GM23248 (cell line): ENCODE measurements at regions of chr13 and their contacts with region 1.

Region 1: DNA sequence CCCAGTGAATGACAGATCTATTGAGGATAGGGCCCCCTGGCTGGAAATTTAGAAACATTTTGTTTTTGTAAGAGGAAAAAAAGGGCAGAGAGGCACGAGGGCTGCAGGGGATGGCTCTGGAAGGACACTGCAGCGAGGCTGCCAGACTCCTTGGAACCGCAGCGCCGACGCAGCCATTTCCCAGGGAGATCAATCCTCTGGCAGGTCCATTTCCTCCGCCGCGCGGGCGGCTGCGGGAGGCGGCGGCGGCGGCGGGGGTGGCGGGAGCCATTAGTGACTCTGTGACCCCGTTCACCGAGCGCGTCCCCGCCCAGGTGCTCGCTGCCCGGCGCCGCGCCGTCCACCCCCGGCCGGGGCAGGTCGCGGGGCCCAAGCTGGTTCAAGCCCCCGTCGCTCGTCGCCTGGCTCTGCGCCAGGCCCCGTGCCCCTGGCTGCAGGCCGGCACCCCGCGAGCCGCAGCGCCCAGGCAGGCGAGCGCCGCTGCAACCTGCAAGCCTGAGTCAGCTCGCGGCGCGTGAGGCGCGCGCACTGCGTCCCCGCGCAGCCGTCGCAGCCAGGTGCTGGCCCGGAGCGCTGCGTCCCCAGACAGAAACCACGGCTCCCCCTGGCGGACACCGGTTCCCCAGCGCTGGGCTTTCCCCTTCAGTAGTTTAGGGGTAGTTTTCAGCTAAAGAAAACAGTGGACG is 192.6 kb downstream of the KATNAL1 start:
- DNase-seq: peak; percentile 94
- H3K4me3 ChIP-seq: peak overlapping the region; percentile 76
- H3K27ac ChIP-seq: peak overlapping the region; percentile 57
- H3K4me1 ChIP-seq: peaks cover 41% of the 10 kb centered on the region
- H3K27me3 ChIP-seq: no peaks in the 10 kb centered on the region

Region 2: GRCh38 chr13:29513397-29514322 is 601.1 kb before region 1 on chr13:
- in situ Hi-C with region 1: loop called (anchors 10 kb)
- DNase-seq: peak; percentile 84
- H3K4me3 ChIP-seq: no peak overlapping the region
- H3K27ac ChIP-seq: peak overlapping the region; percentile 88
- H3K4me1 ChIP-seq: peaks cover 63% of the 10 kb centered on the region
- H3K27me3 ChIP-seq: no peaks in the 10 kb centered on the region

Region 3: DNA sequence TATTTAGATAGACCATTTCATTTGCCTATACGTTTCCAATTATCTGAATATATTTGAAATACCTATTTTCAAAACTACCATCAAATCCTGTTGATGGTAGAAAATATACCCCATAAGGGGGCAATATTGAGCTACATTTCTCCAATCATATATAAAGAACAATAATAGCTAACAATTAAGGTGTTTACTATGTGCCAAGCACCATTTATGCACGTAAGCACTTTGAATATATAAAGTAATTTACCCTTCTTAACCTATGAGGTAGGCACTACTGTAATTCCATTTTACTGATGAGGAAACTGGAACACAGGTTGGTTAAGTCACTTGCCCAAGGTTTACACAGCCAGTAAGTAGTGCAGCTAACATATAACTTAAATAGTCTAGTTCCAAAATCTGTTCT is 343.5 kb before region 1 on chr13:
- in situ Hi-C with region 1: loop called (anchors 10 kb)
- DNase-seq: peak; percentile 48
- H3K4me3 ChIP-seq: no peak overlapping the region
- H3K27ac ChIP-seq: no peak overlapping the region
- H3K4me1 ChIP-seq: peaks cover 17% of the 10 kb centered on the region
- H3K27me3 ChIP-seq: no peaks in the 10 kb centered on the region

Region 4: DNA sequence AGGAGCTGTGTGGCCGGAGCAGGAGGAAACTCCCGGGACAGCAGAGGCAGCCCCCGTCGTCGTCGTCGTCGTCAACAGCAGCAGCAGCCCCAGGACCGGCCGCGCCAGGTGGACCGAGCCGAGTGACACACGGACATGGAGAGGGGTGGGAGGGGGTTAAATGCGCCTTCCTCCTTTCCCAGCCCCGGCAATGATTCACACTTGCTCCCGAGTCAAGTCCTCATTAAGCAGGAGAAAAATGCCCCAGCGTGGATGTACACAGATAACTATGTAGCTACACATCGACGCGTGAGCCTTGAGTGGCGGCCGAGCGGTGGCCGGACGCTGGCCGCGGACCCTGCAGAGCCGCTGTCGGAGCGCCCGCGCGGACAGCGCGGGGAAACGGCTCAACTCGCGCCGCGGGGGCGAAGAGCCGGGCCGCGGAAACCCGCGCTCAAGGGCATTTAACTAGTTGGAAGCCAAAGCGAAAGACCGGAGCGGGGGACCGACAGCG is 264.9 kb before region 1 on chr13:
- in situ Hi-C with region 1: loop called (anchors 5 kb)
- DNase-seq: peak; percentile 91
- H3K4me3 ChIP-seq: peak overlapping the region; percentile 94
- H3K27ac ChIP-seq: peak overlapping the region; percentile 95
- H3K4me1 ChIP-seq: peaks cover 41% of the 10 kb centered on the region
- H3K27me3 ChIP-seq: no peaks in the 10 kb centered on the region

Region 5: DNA sequence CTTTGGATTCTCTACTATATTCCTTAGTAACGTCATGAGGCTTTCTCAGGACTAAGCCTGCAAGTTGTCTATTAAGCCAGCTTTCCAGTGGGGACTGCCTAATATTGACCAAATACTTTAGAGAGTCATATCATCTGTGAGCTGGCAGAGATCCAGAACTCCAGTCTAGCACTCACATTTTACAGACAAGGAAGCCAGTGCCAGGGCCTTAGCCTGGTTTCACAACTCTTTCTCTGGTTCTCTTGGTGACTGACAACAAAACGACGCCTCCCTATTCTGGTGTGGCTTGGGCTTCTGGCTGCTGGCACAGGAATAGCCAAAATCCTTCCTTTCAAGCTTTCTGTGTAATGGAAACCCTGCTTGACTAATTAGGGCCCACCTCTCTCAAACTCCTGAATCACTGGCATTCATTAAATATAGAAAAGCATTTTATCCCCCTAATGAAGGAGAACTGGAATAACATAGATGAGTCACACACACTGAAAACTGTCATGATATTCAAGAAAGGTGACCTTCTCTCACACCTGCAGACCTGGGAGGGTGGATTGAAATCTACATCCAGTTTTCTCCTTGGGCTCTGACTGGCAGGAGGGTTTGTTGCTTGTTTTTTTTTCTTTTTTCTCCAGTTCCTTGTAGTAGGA is 189.1 kb before region 1 on chr13:
- in situ Hi-C with region 1: loop called (anchors 25 kb)
- DNase-seq: peak; percentile 94
- H3K4me3 ChIP-seq: no peak overlapping the region
- H3K27ac ChIP-seq: peak overlapping the region; percentile 92
- H3K4me1 ChIP-seq: peaks cover 44% of the 10 kb centered on the region
- H3K27me3 ChIP-seq: no peaks in the 10 kb centered on the region

Region 6: DNA sequence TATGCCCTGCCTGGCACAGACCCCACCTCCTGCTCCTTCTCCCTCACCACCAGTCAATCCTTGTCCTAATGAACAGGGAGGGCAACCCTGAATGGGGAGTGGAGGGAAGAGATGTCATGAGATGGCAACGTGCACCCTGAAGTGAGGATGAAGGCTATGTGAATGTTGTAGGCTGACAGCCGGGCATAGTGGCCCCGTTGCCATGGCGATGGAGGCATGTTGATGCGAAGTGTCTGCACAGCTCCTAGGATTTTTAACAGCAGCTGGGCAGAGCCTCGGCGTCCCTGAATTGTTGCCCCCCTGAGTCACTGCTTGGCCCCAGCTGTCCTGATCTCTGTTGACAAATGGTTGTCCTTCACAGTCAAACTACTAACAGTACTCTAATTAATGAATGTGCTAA is 615.8 kb after region 1 on chr13:
- in situ Hi-C with region 1: no loop called
- DNase-seq: no peak
- H3K4me3 ChIP-seq: no peak overlapping the region
- H3K27ac ChIP-seq: no peak overlapping the region
- H3K4me1 ChIP-seq: peaks cover 16% of the 10 kb centered on the region
- H3K27me3 ChIP-seq: no peaks in the 10 kb centered on the region